Activated CD4-positive, alpha-beta memory T cell treated with anti-CD3 and anti-CD28 coated beads for 36 hours (primary cell): ENCODE measurements at regions of chr5 and their contacts with region 1.

Region 1: GRCh38 chr5:38809388-38810359 is 36.1 kb upstream of the OSMR start:
- DNase-seq: peak; percentile 75
- H3K4me3 Mint-ChIP-seq: no peak overlapping the region
- H3K27ac Mint-ChIP-seq: no peak overlapping the region
- H3K4me1 Mint-ChIP-seq: peaks cover 19% of the 10 kb centered on the region
- H3K27me3 Mint-ChIP-seq: peaks cover 26% of the 10 kb centered on the region

Region 2: GRCh38 chr5:38265546-38266179 is 544.0 kb before region 1 on chr5:
- CTCF ChIA-PET with region 1: interaction called, 4 read pairs
- POLR2A ChIA-PET with region 1: no interaction called
- intact Hi-C with region 1: loop called (anchors 10 kb)
- DNase-seq: peak; percentile 48
- H3K4me3 Mint-ChIP-seq: no peak overlapping the region
- H3K27ac Mint-ChIP-seq: no peak overlapping the region
- H3K4me1 Mint-ChIP-seq: no peaks in the 10 kb centered on the region
- H3K27me3 Mint-ChIP-seq: peaks cover 33% of the 10 kb centered on the region

Region 3: GRCh38 chr5:38382898-38383297 is 426.8 kb before region 1 on chr5:
- CTCF ChIA-PET with region 1: interaction called, 28 read pairs
- POLR2A ChIA-PET with region 1: no interaction called
- intact Hi-C with region 1: loop called (anchors 1 kb)
- DNase-seq: peak; percentile 64
- H3K4me3 Mint-ChIP-seq: no peak overlapping the region
- H3K27ac Mint-ChIP-seq: no peak overlapping the region
- H3K4me1 Mint-ChIP-seq: peaks cover 3% of the 10 kb centered on the region
- H3K27me3 Mint-ChIP-seq: peaks cover 23% of the 10 kb centered on the region

Region 4: DNA sequence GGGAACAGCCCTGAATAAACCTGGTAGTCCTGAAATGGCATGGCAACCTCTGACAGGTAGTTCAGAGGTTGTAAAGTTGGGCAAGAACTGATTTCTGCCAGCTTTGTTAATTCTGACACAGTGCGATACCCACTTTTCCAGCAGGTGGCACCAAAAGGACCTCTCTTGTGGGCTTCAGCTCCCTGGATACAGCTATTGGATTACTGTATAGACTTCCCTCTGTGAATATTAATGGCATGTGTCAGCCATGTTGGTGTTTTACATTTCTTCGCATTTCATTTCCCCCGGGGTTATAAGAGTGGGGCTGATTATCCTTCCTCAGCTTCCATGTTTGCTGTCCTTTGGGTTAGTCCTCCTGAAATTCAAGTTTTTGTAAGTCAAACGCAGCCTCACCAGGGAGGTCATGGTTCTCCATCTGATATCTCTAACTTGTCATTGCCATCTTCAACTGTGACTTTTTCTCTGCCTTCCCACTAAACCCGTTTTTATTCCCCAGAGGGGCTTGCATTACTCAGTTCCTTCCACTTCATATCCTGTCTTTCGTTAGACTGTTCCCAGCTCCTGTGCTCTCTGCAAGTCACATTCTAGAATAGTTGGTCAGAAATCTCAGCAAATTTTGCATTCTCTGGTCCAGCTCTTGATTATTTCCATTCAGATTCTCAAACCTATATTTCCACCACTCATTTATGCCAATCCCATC is 388.8 kb before region 1 on chr5:
- CTCF ChIA-PET with region 1: interaction called, 48 read pairs
- POLR2A ChIA-PET with region 1: no interaction called
- intact Hi-C with region 1: loop called (anchors 1 kb)
- DNase-seq: peak; percentile 42
- H3K4me3 Mint-ChIP-seq: no peak overlapping the region
- H3K27ac Mint-ChIP-seq: no peak overlapping the region
- H3K4me1 Mint-ChIP-seq: no peaks in the 10 kb centered on the region
- H3K27me3 Mint-ChIP-seq: peaks cover 5% of the 10 kb centered on the region

Region 5: DNA sequence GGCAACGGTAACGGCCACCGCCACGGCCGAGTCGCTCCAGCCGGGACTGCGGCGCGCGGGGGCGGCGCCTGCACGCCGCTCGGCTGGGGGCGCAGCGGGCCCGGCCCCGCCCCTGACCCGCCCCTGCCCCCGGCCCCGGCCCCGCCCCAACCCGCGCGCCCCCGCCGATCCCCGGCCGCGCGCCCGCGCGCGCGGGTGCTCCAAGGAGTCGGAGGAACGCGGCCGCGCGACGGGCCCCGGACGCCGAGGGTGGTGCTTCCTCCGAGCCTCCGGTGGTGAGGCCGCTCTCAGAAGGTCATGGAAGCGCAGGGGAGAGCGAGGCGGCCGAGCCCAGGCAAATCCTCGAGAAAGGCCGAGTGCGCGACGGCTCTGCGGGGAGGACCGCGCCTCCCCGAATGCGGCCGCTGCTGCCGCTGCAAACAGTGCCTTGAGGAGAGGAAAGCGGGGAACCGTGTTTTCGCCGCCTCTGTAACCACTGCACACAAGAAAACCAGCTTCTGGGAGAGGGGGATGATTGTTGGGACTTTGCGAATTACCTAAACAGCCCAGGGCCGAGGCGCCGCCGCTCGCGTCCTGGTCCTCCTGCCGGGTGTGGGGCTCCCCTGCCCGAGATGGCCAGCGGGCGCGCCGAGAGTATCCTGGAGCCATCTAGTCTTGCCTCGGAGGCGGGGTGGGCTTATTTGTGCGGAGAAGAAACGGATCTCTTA is 252.9 kb before region 1 on chr5 and contains the start of gene LIFR:
- CTCF ChIA-PET with region 1: no interaction called
- POLR2A ChIA-PET with region 1: no interaction called
- intact Hi-C with region 1: loop called (anchors 5 kb)
- DNase-seq: peak; percentile 72
- H3K4me3 Mint-ChIP-seq: peak within 1 kb of the TSS; percentile 75
- H3K27ac Mint-ChIP-seq: no peak within 1 kb of the TSS
- H3K4me1 Mint-ChIP-seq: peaks cover 8% of the 10 kb centered on the region
- H3K27me3 Mint-ChIP-seq: peaks cover 47% of the 10 kb centered on the region
- total RNA-seq, gene LIFR: 0.05 to 0.14 TPM

Region 6: GRCh38 chr5:38739007-38739743 is 70.5 kb before region 1 on chr5:
- CTCF ChIA-PET with region 1: no interaction called
- POLR2A ChIA-PET with region 1: no interaction called
- intact Hi-C with region 1: no loop called
- DNase-seq: no peak
- H3K4me3 Mint-ChIP-seq: no peak overlapping the region
- H3K27ac Mint-ChIP-seq: no peak overlapping the region
- H3K4me1 Mint-ChIP-seq: no peaks in the 10 kb centered on the region
- H3K27me3 Mint-ChIP-seq: no peaks in the 10 kb centered on the region

Region 7: DNA sequence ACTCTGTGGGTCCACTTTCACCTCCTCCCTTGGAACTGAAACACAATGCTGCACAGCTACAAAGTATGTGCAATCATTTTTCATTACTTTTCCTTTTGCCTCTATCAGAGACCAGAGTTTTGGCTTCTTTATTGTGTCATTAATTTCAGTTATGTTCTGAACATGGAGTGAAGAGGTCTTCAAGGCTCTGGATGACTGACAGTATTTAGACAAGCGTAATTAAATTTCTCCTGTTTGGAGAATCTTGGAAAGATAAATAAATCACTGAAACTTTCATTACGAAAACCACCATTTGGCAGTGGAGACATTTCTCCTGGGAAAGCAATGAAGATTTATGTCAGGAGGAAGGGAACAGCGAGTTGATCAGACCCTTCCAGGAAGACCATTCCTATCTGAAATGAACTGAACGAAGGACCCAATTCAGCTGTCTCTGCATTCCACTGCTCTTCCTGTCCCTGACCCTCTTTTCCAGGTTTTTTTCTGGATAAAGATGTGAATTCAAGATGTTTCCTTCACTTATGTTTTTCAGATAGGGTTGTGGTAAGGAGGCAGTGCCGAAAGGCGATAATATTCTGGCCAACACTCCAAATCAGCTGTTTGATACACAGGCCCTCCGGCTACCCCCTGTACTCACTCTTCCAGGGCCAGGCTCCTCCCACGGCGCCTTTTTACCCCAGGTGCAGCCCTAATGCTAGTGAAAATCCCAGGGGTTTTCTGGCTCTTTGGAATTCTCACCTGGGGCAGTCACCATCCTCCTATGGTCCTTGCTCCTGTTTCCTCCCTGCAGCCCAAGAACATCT is 41.1 kb before region 1 on chr5:
- CTCF ChIA-PET with region 1: no interaction called
- POLR2A ChIA-PET with region 1: no interaction called
- intact Hi-C with region 1: no loop called
- DNase-seq: no peak
- H3K4me3 Mint-ChIP-seq: no peak overlapping the region
- H3K27ac Mint-ChIP-seq: no peak overlapping the region
- H3K4me1 Mint-ChIP-seq: no peaks in the 10 kb centered on the region
- H3K27me3 Mint-ChIP-seq: peaks cover 17% of the 10 kb centered on the region

Region 8: DNA sequence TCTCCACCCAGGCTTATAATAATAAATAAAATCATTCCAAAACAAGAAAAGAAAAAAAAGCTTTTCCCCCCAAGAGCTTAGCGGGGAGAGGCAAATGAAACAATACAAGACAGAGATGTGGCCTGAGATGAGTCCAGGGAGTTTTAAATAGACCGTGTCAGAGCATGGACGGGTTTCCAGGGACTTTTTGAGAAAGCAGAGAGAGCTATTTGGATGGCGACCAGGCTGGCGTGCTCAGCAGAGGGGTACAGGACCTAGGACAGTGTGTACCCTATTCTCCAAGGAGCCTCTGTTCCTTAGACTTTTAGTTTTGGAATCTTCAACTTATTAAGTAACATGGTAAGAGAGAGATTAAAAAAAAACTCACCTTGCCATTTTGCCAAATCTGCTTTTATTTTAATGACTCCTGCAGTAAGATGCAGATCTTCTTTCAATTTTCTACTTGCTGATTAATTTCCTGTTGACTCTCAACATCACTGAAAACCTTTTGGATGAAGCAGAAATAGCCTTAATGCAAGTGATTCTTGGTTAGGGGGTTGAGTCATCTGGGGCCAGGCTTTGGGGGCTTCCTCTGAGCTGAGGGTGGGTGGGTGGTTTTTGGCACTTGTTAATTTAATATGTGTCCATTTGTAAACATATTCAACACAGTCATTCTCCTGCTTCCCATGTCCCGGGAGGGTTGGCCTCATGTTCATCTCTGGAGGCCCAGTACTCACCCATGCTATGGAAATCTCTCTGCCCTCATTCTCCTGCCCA is 13.5 kb before region 1 on chr5:
- CTCF ChIA-PET with region 1: interaction called, 28 read pairs
- POLR2A ChIA-PET with region 1: no interaction called
- intact Hi-C with region 1: loop called (anchors 1 kb)
- DNase-seq: no peak
- H3K4me3 Mint-ChIP-seq: no peak overlapping the region
- H3K27ac Mint-ChIP-seq: no peak overlapping the region
- H3K4me1 Mint-ChIP-seq: peaks cover 1% of the 10 kb centered on the region
- H3K27me3 Mint-ChIP-seq: peaks cover 15% of the 10 kb centered on the region

Region 9: DNA sequence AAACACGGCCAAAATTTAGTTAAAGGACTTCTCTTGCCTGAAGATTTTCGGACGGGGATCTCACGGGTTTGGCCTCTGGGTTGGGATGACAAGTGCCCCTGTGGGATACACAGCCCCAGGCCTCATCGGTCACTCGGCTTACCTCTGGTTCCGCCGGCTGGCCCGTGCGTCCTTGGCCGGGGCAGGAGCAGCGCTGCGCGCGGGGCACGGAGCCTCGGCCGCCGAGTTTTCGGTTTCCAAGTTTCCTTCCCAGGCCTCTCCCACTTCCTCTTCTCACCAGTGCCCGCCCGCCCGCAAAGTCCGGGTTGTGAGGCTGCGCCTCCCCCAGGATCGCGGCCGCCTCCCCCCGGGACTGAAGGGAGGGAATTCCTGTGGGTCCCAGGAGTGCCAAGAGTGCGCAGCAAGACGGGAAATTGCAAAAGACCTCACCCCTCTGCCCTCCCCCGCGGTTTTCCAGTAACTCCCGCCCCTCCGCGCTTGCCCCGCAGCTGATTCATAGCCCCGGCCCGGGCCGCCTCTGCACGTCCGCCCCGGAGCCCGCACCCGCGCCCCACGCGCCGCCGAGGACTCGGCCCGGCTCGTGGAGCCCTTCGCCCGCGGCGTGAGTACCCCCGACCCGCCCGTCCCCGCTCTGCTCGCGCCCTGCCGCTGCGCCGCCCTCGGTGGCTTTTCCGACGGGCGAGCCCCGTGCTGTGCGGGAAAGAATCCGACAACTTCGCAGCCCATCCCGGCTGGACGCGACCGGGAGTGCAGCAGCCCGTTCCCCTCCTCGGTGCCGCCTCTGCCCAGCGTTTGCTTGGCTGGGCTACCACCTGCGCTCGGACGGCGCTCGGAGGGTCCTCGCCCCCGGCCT is 36.1 kb after region 1 on chr5 and contains the start of gene OSMR:
- CTCF ChIA-PET with region 1: no interaction called
- POLR2A ChIA-PET with region 1: no interaction called
- intact Hi-C with region 1: no loop called
- DNase-seq: peak; percentile 58
- H3K4me3 Mint-ChIP-seq: peak within 1 kb of the TSS; percentile 62
- H3K27ac Mint-ChIP-seq: no peak within 1 kb of the TSS
- H3K4me1 Mint-ChIP-seq: peaks cover 3% of the 10 kb centered on the region
- H3K27me3 Mint-ChIP-seq: peaks cover 58% of the 10 kb centered on the region
- total RNA-seq, gene OSMR: 0.10 TPM in 1 of 2 experiments, not detected in the other